Endothelial cell of umbilical vein (primary cell): ENCODE measurements at regions of chr19 and their contacts with region 1.

Region 1: GRCh38 chr19:7535035-7535992 is at the start of gene PNPLA6:
- DNase-seq: peak; percentile 95
- H3K4me3 ChIP-seq: peak within 1 kb of the TSS; percentile 55 to 97 (median 82)
- H3K27ac ChIP-seq: peak within 1 kb of the TSS; percentile 50
- H3K4me1 ChIP-seq: peaks cover 8% of the 10 kb centered on the region
- H3K27me3 ChIP-seq: no peaks in the 10 kb centered on the region
- CTCF ChIP-seq: peak in 1 of 2 donors; percentile 0
- POLR2A ChIP-seq: peak; percentile 8
- total RNA-seq, gene PNPLA6: 163 and 164 TPM in 2 replicates

Region 2: DNA sequence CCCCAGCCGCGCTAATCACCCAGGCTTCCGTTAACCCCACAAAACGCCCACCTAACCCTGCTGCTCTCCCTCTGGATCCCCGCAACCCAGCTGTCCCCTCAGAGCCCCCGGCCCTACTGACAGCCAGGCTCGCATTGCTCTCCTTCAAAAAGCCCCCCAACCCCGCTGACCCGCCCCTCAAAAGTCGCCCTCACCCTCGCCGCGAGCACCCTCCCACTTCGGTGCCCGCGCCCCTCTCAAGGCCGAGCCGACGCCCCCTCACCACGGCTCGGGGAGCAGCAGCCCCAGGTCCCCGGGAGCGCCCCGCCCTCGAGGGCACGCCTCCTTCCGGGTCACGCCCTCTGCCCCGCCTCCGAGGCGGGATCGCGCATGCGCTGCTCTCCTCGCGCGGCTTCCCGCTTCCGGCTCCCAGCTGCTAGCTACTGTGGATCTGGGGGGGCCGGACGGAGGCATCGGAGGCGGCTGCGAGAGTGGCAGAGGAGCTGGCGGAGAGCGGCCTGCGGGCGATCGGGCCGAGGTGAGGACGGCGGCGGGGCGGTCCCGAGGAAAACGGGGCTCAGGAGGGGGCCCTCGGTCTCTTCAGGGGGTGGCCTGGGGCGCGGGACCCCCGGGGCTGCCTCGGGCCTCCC is 140.5 kb before region 1 on chr19:
- CTCF ChIA-PET with region 1: interaction called, 4 read pairs
- POLR2A ChIA-PET with region 1: no interaction called
- dilution Hi-C with region 1: no loop called
- intact Hi-C with region 1: loop called (anchors 5 kb)
- DNase-seq: peak; percentile 93
- H3K4me3 ChIP-seq: peak overlapping the region; percentile 79 to 88 (median 88)
- H3K27ac ChIP-seq: peak overlapping the region; percentile 26
- H3K4me1 ChIP-seq: peaks cover 23% of the 10 kb centered on the region
- H3K27me3 ChIP-seq: no peaks in the 10 kb centered on the region
- CTCF ChIP-seq: no peak
- POLR2A ChIP-seq: peak; percentile 90

Region 3: DNA sequence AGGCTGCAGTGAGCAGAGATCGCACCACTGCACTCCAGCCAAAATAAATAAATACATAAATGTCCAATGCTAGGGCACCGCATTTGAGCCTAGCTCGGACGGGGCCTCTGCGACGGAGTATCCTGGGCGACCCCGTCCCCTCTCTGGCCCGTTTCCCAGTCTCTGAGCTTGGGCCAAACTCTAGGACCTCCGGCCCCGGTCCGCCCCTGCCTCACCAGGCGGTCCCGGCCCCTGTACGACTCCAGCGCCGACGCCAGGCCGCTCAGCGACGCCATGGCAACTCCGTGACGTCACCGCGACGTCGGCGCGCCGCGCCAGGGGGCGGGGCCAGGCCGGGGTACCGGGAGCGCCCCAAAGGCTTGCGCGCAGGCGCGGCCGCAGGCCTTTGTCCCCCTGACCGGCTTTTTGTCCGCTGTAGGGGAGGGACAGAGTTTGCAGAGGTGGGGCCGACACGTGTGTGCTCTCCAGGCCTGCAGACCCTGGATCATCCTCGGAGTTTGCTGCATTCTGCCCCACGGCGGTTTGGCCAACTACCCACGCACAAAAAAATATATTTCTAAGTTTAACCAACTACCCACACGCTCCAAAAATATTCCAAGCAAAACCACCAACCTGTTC is 46.5 kb before region 1 on chr19 and contains the start of gene PEX11G:
- CTCF ChIA-PET with region 1: no interaction called
- POLR2A ChIA-PET with region 1: no interaction called
- dilution Hi-C with region 1: no loop called
- intact Hi-C with region 1: loop called (anchors 2 kb)
- DNase-seq: peak; percentile 91
- H3K4me3 ChIP-seq: peak within 1 kb of the TSS; percentile 32 to 67 (median 45)
- H3K27ac ChIP-seq: peak within 1 kb of the TSS; percentile 68
- H3K4me1 ChIP-seq: peaks cover 18% of the 10 kb centered on the region
- H3K27me3 ChIP-seq: no peaks in the 10 kb centered on the region
- CTCF ChIP-seq: no peak
- POLR2A ChIP-seq: peak; percentile 91
- total RNA-seq, gene PEX11G: 1.3 and 1.6 TPM in 2 replicates

Region 4: GRCh38 chr19:7522072-7522922 is 13.0 kb before region 1 on chr19 and contains the start of gene MCOLN1:
- CTCF ChIA-PET with region 1: interaction called, 6 read pairs
- POLR2A ChIA-PET with region 1: interaction called, 12 read pairs
- dilution Hi-C with region 1: no loop called
- intact Hi-C with region 1: loop called (anchors 1 kb)
- DNase-seq: peak; percentile 97
- H3K4me3 ChIP-seq: peak within 1 kb of the TSS; percentile 64 to 94 (median 81)
- H3K27ac ChIP-seq: peak within 1 kb of the TSS; percentile 4
- H3K4me1 ChIP-seq: peaks cover 16% of the 10 kb centered on the region
- H3K27me3 ChIP-seq: no peaks in the 10 kb centered on the region
- CTCF ChIP-seq: no peak
- POLR2A ChIP-seq: peak; percentile 73
- total RNA-seq, gene MCOLN1: 23.0 and 26.9 TPM in 2 replicates

Region 5: GRCh38 chr19:7629347-7630054 is 94.2 kb after region 1 on chr19 and contains the starts of genes PET100 and XAB2:
- CTCF ChIA-PET with region 1: no interaction called
- POLR2A ChIA-PET with region 1: no interaction called
- dilution Hi-C with region 1: no loop called
- intact Hi-C with region 1: loop called (anchors 1 kb)
- DNase-seq: peak; percentile 99
- H3K4me3 ChIP-seq: peak within 1 kb of the TSS; percentile 91 to 96 (median 92)
- H3K27ac ChIP-seq: peak within 1 kb of the TSS; percentile 94
- H3K4me1 ChIP-seq: peaks cover 16% of the 10 kb centered on the region
- H3K27me3 ChIP-seq: no peaks in the 10 kb centered on the region
- CTCF ChIP-seq: no peak
- POLR2A ChIP-seq: no peak
- total RNA-seq, gene PET100: 162 and 172 TPM in 2 replicates
- total RNA-seq, gene XAB2: 37.0 and 37.3 TPM in 2 replicates

Region 6: DNA sequence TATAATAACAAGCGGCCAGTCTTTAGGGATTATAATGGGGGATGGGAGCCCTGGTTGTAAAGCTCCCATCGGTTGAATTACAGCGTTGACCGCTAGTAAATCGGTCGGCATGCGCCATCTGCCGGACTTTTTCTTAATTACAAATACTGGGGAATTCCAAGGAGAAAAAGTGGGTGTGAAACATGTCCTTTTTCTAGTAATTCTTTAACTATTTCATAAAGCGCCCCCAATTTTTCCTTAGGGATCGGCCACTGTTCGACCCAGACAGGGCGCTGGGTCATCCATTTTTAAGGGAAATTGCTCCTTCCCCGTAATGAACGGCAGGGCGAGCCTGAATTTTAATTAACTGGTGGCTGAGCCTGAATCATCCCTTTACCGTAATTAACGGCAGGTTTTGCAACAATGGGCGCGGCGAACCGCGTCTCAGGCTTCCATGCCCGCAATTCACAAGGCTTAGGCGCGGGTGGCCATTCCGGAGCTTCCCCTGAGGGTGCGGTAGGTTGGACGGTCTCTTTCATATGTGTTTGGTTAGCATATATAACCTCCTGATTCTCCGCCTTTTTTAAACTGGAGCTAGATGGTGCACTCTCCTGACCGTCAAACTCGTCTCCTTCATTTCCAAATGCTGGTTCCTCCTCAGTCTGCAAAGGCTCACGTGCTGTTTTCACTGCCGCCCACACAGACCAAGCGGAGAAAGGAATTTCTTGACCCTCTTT is 264.5 kb after region 1 on chr19:
- CTCF ChIA-PET with region 1: no interaction called
- POLR2A ChIA-PET with region 1: no interaction called
- dilution Hi-C with region 1: no loop called
- intact Hi-C with region 1: no loop called
- DNase-seq: peak; percentile 83
- H3K4me3 ChIP-seq: peak overlapping the region in 2 of 3 experiments; percentile 2 to 12
- H3K27ac ChIP-seq: no peak overlapping the region
- H3K4me1 ChIP-seq: peaks cover 22% of the 10 kb centered on the region
- H3K27me3 ChIP-seq: no peaks in the 10 kb centered on the region
- CTCF ChIP-seq: peak; percentile 43 to 47
- POLR2A ChIP-seq: no peak